Thyroid gland (tissue), 4 donors: ENCODE measurements at regions of chr22 and their contacts with region 1.

Region 1: DNA sequence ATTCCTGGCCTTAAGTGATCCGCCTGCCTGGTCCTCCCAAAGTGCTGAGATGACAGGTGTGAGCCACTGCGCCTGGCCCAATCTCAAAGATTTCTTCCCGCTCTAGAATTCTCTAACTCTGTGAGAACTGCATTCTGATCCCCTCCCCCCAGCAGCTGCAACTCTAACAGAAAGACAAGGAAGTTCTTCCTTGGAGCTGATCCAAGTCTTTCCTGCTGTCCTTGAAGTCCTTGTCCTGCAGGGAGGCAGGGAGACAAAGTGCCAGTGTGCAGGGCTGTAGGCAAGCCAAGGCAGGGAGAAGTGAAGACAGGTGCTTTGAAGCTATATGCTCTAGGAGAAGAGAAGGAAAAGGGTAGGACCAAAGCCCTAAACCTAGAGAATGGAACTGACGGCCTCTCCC is 9.5 kb upstream of the GGA1 start:
- DNase-seq: no peak
- H3K4me3 ChIP-seq: no peak overlapping the region
- H3K27ac ChIP-seq: no peak overlapping the region
- H3K4me1 ChIP-seq: peaks cover 0 to 5% of the 10 kb centered on the region in 2 donors
- H3K27me3 ChIP-seq: no peaks in the 10 kb centered on the region
- CTCF ChIP-seq: no peak
- POLR2A ChIP-seq: no peak

Region 2: DNA sequence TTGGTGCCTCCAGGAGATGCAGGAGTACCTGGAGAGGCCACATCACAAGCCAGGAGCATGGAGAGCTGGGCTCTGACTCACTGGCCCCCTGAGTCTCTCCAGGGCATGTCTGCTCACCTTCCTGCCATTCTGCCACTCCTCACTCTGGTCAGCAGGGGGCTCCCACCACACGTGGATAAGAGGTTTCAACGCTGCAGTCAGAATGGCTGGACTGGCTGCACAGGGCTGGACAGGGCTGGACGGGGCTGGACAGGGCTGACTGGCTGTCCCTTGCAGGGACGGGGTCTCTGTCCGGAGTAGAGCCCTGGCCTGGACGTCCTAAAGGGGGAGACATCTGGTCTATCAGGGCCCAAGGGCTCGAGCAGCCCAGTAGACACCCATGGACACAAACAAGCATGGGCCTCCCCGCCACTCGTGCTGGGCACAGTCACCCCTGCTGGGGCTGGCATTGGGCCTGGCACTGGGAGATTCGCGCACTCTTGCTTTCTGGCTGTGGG is 282.2 kb before region 1 on chr22:
- intact Hi-C with region 1: loop called (anchors 10 kb)
- DNase-seq: peak; percentile 66 to 75
- H3K4me3 ChIP-seq: no peak overlapping the region
- H3K27ac ChIP-seq: no peak overlapping the region
- H3K4me1 ChIP-seq: no peaks in the 10 kb centered on the region
- H3K27me3 ChIP-seq: no peaks in the 10 kb centered on the region
- CTCF ChIP-seq: peak in 5 of 6 experiments; percentile 40 to 86 (median 80)
- POLR2A ChIP-seq: no peak

Region 3: DNA sequence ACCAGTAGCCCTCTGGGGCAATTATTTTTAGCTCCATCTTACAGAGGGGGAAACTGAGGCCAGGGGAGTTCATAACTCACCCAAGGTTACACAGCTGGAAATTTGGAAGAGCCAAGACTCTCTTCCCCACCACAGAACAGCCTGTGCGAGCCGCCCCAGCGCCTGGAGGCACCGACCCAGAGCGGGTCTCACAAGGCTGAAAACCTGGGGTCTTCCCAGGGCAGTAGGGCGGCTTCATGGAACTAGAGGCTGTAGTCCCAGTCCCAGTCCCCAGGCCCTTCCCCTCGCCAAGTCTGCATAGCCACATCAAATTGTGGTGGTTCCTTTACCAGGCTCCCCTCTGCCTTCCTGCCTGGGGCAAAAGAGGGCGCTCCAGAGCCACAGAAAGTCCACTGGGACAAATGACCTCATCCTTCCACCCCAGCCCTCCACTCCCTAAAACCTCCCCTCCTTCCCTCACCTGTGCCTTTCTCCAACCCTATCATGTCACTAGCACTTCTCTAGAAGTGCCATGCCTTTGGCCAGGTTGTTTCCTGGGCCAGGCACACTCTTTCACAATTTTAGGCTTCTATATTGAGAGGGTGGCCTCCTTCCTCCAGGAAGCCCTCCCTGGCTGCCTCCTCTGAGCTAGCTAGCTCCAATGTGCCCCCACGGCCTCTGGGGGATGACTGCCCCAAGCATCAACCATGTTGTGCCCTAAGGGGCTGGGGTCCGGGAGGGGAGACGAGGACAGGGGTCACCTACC is 54.0 kb before region 1 on chr22:
- intact Hi-C with region 1: loop called (anchors 10 kb)
- DNase-seq: peak; percentile 48 to 50
- H3K4me3 ChIP-seq: no peak overlapping the region
- H3K27ac ChIP-seq: peak overlapping the region; percentile 85 to 94 (median 92)
- H3K4me1 ChIP-seq: peaks cover 32 to 39% of the 10 kb centered on the region in 2 donors
- H3K27me3 ChIP-seq: no peaks in the 10 kb centered on the region
- CTCF ChIP-seq: peak; percentile 9 to 68 (median 51)
- POLR2A ChIP-seq: no peak

Region 4: GRCh38 chr22:37647928-37648327 is 48.8 kb after region 1 on chr22:
- intact Hi-C with region 1: no loop called
- DNase-seq: no peak
- H3K4me3 ChIP-seq: no peak overlapping the region
- H3K27ac ChIP-seq: no peak overlapping the region
- H3K4me1 ChIP-seq: peaks cover 0 to 3% of the 10 kb centered on the region in 2 donors
- H3K27me3 ChIP-seq: no peaks in the 10 kb centered on the region
- CTCF ChIP-seq: no peak
- POLR2A ChIP-seq: no peak